ENCODE measurements at regions of chr2 and their contacts with region 1.

Region 1: DNA sequence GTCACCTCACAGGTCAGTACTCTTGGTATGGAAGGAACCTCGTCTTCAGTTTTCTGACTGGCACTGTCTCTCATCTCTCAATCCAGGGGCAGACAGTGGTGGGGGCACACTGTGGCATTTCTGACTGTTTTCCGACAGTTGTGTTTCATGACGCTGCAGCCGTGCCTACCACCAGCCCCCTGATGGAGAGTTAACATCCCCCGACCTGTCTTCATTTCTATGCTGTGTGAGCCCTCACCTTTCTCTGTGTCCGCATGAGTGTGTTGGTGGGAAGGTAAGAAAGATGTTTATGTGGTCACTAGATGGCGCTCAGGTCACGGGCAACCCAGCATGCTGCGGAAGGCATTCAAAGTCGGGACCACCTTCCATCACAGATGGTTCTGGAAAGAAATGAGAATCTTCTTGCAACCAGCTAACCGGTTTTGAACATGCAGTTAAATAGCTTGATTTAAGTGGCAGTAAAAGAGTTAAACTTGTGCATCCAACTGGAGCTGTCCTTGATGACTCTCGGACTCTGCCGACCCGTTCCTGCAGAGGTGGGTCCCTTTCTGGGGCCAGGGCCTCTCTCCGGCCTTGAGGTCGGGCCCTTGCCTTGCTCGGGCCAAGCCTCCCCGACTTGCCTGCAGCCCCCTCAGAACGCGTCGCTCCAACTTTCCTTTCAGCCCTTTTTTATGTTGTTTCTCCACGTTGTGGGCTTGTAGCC is 92.4 kb downstream of the DYSF start:
- DNase-seq: peak; percentile 30
- ATAC-seq: peak; percentile 86
- H3K4me3 ChIP-seq: peak overlapping the region; percentile 1 to 25; a peak in 3 of 4 replicates
- H3K27ac ChIP-seq: no peak overlapping the region
- H3K4me1 ChIP-seq: no peaks in the 10 kb centered on the region; the same call in 1 of the 2 replicates
- H3K27me3 ChIP-seq: no peaks in the 10 kb centered on the region; the same call in 1 of the 2 replicates
- CTCF ChIP-seq: peak; percentile 90

Region 2: GRCh38 chr2:71923887-71924533 is 378.3 kb after region 1 on chr2:
- CTCF ChIA-PET with region 1: no interaction called
- POLR2A ChIA-PET with region 1: no interaction called
- in situ Hi-C with region 1: no loop called
- intact Hi-C with region 1: loop called (anchors 5 kb)
- DNase-seq: peak; percentile 61
- ATAC-seq: peak; percentile 90
- H3K4me3 ChIP-seq: no peak overlapping the region
- H3K27ac ChIP-seq: no peak overlapping the region
- H3K4me1 ChIP-seq: no peaks in the 10 kb centered on the region
- H3K27me3 ChIP-seq: no peaks in the 10 kb centered on the region
- CTCF ChIP-seq: peak; percentile 87

Region 3: DNA sequence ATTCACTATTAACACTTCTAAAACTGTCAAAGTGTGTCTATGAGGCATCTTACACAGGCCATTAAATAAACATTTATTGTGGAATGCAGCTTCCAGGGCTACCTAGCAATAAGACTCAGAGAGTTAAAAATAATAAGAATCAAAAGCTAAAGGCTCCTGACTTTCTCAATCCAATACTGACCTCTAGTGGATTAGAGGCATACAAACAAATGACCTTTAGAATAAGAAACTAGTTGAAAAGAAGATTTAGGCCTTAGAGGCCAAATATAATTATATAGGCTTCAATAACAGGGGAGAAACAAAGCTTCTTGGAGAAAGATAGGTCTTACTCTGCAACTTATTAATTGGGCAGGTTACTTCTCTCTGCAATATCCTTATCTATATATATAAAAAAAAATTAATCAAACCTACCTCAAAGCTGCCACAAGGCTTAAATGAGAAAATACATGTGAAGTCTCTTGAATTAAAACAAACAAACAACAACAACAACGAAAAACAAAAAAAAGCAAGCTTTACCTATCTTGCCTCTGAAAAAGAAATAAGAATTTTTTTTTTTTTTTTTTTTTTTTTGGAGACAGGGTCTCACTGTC is 1034.0 kb after region 1 on chr2:
- CTCF ChIA-PET with region 1: no interaction called
- POLR2A ChIA-PET with region 1: no interaction called
- in situ Hi-C with region 1: no loop called
- intact Hi-C with region 1: loop called (anchors 10 kb)
- DNase-seq: no peak
- ATAC-seq: no peak
- H3K4me3 ChIP-seq: no peak overlapping the region
- H3K27ac ChIP-seq: no peak overlapping the region
- H3K4me1 ChIP-seq: no peaks in the 10 kb centered on the region
- H3K27me3 ChIP-seq: no peaks in the 10 kb centered on the region
- CTCF ChIP-seq: peak; percentile 62; the same call in 1 of the 2 replicates

Region 4: GRCh38 chr2:72757177-72757775 is 1211.6 kb after region 1 on chr2:
- CTCF ChIA-PET with region 1: no interaction called
- POLR2A ChIA-PET with region 1: no interaction called
- in situ Hi-C with region 1: no loop called
- intact Hi-C with region 1: loop called (anchors 10 kb)
- DNase-seq: no peak
- ATAC-seq: peak; percentile 84
- H3K4me3 ChIP-seq: no peak overlapping the region
- H3K27ac ChIP-seq: peak overlapping the region; percentile 74; the same call in 1 of the 2 replicates
- H3K4me1 ChIP-seq: peaks cover 14% of the 10 kb centered on the region
- H3K27me3 ChIP-seq: no peaks in the 10 kb centered on the region
- CTCF ChIP-seq: no peak

Measured in Panc1 (cell line).